Activated CD8-positive, alpha-beta T cell treated with anti-CD3 and anti-CD28 coated beads, Interleukin-2, amount 10 ng/mL, durations not matched to agents 7 days and 5 days (primary cell): ENCODE measurements at regions of chr7 and their contacts with region 1.

Region 1: GRCh38 chr7:106659963-106660861 is 746 bp downstream of the CCDC71L start:
- DNase-seq: peak; percentile 85
- ATAC-seq: peak; percentile 67
- H3K4me3 Mint-ChIP-seq: peak overlapping the region; percentile 92
- H3K27ac Mint-ChIP-seq: peak overlapping the region; percentile 89
- H3K4me1 Mint-ChIP-seq: peaks cover 30% of the 10 kb centered on the region
- H3K27me3 Mint-ChIP-seq: peaks cover 4% of the 10 kb centered on the region

Region 2: GRCh38 chr7:106176414-106177299 is 483.6 kb before region 1 on chr7:
- CTCF ChIA-PET with region 1: interaction called, 13 read pairs
- POLR2A ChIA-PET with region 1: no interaction called
- DNase-seq: peak; percentile 75
- ATAC-seq: peak; percentile 81
- H3K4me3 Mint-ChIP-seq: no peak overlapping the region
- H3K27ac Mint-ChIP-seq: no peak overlapping the region
- H3K4me1 Mint-ChIP-seq: peaks cover 4% of the 10 kb centered on the region
- H3K27me3 Mint-ChIP-seq: peaks cover 22% of the 10 kb centered on the region

Region 3: DNA sequence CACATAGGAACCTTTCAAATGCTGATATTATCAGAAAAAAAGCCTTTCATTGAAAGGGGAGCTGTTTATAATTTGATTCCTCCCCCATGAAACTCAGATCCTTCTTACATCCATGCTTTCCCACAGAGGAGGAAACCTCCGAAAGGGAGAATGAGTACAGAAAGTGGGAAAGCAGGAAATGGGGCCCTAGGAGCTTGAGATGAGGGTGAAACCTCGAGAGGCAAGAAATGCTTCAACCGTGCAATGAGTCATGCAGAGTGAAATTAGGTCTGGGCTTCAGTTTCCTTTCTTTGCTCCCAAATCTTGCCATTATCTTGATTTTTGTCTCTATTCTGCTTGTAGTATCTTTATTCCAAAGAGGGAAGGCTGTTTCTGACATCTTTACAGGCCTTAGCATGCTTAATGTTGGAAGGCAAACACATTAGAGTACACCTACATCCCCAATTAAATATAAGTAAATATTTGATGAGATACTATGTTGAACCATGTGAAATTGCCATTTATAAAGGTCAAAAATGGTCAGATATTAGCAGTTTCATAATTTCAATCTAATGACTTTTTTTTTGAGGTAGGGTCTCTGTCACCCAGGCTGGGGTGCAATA is 454.5 kb before region 1 on chr7:
- CTCF ChIA-PET with region 1: no interaction called
- POLR2A ChIA-PET with region 1: no interaction called
- DNase-seq: no peak
- ATAC-seq: no peak
- H3K4me3 Mint-ChIP-seq: no peak overlapping the region
- H3K27ac Mint-ChIP-seq: no peak overlapping the region
- H3K4me1 Mint-ChIP-seq: peaks cover 4% of the 10 kb centered on the region
- H3K27me3 Mint-ChIP-seq: peaks cover 14% of the 10 kb centered on the region

Region 4: DNA sequence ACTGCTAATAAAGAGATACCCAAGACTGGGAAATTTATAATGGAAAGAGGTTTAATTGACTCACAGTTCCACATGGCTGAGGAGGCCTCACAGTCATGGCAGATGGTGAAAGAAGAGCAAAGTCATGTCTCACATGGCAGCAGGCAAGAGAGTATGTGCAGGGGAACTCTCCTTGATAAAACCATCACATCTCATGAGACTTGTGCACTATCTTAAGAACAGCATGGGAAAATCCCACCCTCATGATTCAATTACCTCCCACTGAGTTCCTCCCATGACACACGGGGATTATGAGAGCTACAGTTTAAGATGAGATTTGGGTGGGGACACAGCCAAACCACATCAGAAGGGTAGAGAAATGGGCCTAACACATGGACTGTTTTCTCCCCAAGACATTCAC is 155.6 kb before region 1 on chr7:
- CTCF ChIA-PET with region 1: no interaction called
- POLR2A ChIA-PET with region 1: no interaction called
- DNase-seq: no peak
- ATAC-seq: no peak
- H3K4me3 Mint-ChIP-seq: no peak overlapping the region
- H3K27ac Mint-ChIP-seq: no peak overlapping the region
- H3K4me1 Mint-ChIP-seq: no peaks in the 10 kb centered on the region
- H3K27me3 Mint-ChIP-seq: no peaks in the 10 kb centered on the region

Region 5: GRCh38 chr7:106542550-106543220 is 117.5 kb before region 1 on chr7:
- CTCF ChIA-PET with region 1: interaction called, 12 read pairs
- POLR2A ChIA-PET with region 1: no interaction called
- DNase-seq: peak; percentile 48
- ATAC-seq: peak; percentile 58
- H3K4me3 Mint-ChIP-seq: no peak overlapping the region
- H3K27ac Mint-ChIP-seq: no peak overlapping the region
- H3K4me1 Mint-ChIP-seq: peaks cover 8% of the 10 kb centered on the region
- H3K27me3 Mint-ChIP-seq: no peaks in the 10 kb centered on the region

Region 6: DNA sequence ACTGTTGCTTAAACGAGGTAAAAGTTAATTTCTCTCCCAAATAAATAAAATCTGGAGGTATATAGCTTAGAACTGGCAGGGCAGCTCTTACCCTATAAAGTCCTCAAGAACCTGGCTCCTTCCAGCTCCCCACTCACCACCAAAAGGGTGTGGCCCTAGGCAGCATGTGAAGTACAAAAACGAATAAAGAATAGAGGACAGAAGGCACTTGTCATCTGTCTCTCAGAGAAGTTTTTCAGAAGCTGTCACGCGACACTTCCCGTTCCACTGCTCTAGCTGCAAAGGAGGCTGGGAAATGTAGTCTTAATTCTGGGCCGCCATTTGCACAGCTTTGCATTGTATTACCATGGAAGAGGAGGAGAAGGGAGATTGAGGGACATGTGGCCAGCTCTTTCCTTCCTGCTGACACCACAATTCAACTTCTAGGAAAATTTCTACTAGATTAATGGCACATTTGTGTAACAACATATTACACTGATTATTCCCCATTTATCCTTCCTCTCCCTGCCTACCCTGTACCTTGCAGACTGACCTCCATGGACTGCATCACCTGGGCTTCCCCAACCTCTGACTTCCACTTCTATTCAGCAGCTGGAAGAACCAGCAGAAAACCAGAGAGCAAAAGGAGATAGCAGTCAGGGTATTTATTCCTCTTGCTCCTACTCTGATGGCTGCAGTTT is 61.4 kb before region 1 on chr7:
- CTCF ChIA-PET with region 1: interaction called, 12 read pairs
- POLR2A ChIA-PET with region 1: interaction called, 4 read pairs
- DNase-seq: peak; percentile 79
- ATAC-seq: peak; percentile 97
- H3K4me3 Mint-ChIP-seq: peak overlapping the region; percentile 9
- H3K27ac Mint-ChIP-seq: peak overlapping the region; percentile 36
- H3K4me1 Mint-ChIP-seq: peaks cover 8% of the 10 kb centered on the region
- H3K27me3 Mint-ChIP-seq: peaks cover 7% of the 10 kb centered on the region

Region 7: GRCh38 chr7:106679153-106679931 is 19.1 kb after region 1 on chr7:
- CTCF ChIA-PET with region 1: interaction called, 10 read pairs
- POLR2A ChIA-PET with region 1: interaction called, 4 read pairs
- DNase-seq: no peak
- ATAC-seq: peak; percentile 27
- H3K4me3 Mint-ChIP-seq: no peak overlapping the region
- H3K27ac Mint-ChIP-seq: no peak overlapping the region
- H3K4me1 Mint-ChIP-seq: peaks cover 11% of the 10 kb centered on the region
- H3K27me3 Mint-ChIP-seq: no peaks in the 10 kb centered on the region

Region 8: DNA sequence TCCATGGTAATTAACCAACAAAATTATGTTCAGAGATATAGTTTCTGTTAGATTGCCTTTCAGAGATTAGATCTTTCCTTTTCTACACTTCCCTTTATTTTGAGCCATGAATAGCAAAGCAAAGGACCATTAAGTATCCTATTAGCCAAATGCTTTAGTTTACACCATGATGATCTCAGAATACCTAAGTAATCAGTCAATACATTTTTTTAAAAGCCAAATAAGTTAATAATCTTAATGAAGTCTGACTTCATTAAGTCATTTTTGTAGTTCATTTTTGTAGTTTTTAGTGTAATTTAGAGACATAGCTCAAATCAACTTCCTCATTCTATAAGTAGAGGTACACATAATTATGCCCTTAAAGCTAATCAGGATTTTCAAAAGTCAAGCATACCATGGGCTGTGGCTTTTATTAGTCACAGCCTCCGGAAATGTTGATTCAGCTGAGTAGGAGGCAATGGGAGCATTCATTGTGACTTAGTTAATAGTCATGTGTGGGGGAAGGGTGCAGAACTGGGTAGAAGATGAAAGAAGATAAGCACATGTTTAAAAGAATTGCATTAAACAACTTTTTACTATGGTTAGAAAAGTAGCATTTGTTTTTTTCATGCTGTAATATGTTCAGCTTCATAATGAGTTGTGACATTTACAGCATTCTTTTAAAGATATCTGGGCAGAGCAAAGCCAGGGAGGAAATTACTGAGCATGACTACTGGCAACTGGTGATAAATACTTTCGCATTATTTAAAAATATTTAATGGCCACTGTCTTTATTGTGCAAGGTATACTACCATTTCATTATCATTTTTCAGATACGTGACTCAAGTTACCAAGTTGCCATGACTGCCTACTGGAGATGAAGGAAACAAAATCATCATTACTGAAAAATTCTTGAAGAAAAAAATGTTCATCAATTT is 58.0 kb after region 1 on chr7:
- CTCF ChIA-PET with region 1: interaction called, 15 read pairs
- POLR2A ChIA-PET with region 1: no interaction called
- DNase-seq: peak; percentile 73
- ATAC-seq: peak; percentile 97
- H3K4me3 Mint-ChIP-seq: no peak overlapping the region
- H3K27ac Mint-ChIP-seq: no peak overlapping the region
- H3K4me1 Mint-ChIP-seq: peaks cover 2% of the 10 kb centered on the region
- H3K27me3 Mint-ChIP-seq: no peaks in the 10 kb centered on the region

Region 9: DNA sequence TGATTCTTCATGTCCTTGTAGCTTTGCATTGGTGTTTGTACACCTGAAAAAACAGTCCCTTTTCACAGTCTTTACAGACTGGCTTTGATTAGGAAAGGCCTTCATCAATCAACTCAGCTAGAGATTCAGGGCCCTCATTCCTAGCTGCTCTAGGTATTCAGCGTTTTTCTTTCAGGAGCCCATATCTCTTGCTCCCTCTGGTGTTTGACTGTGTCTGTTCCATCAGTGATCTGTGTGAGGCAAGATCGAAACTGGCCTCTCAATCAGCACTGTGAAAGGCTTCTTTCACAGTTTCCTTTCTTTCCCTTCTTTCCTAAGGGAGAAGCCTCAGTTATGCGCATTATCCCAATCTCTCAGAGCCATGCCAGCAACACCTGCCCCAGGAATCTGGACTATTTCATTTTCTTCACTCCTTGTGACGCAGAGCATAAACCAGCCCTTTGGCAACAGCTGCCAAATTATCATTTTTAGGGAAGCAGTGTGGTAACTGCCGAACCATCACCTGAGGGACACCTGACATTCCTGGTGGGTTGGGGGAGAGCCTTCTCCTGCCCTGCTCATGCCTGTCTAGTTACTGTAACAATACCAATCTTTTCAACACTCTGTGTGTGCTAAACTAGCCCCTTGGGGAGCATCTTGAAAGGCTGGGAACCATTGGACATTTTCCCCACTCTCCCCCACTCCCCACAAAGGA is 76.4 kb after region 1 on chr7:
- CTCF ChIA-PET with region 1: interaction called, 195 read pairs
- POLR2A ChIA-PET with region 1: interaction called, 11 read pairs
- DNase-seq: peak; percentile 64
- ATAC-seq: peak; percentile 93
- H3K4me3 Mint-ChIP-seq: no peak overlapping the region
- H3K27ac Mint-ChIP-seq: no peak overlapping the region
- H3K4me1 Mint-ChIP-seq: peaks cover 28% of the 10 kb centered on the region
- H3K27me3 Mint-ChIP-seq: no peaks in the 10 kb centered on the region